AG04450 (cell line): ENCODE measurements at regions of chr9 and their contacts with region 1.

Region 1: GRCh38 chr9:72856972-72857623 is 95.8 kb downstream of the ALDH1A1 start:
- DNase-seq: peak; percentile 16
- H3K4me3 ChIP-seq: no peak overlapping the region
- H3K27ac ChIP-seq: no peak overlapping the region
- H3K27me3 ChIP-seq: no peaks in the 10 kb centered on the region
- CTCF ChIP-seq: peak; percentile 70

Region 2: GRCh38 chr9:72540348-72540873 is 316.7 kb before region 1 on chr9:
- CTCF ChIA-PET with region 1: no interaction called
- POLR2A ChIA-PET with region 1: no interaction called
- DNase-seq: no peak
- H3K4me3 ChIP-seq: no peak overlapping the region
- H3K27ac ChIP-seq: no peak overlapping the region
- H3K27me3 ChIP-seq: no peaks in the 10 kb centered on the region
- CTCF ChIP-seq: no peak

Region 3: DNA sequence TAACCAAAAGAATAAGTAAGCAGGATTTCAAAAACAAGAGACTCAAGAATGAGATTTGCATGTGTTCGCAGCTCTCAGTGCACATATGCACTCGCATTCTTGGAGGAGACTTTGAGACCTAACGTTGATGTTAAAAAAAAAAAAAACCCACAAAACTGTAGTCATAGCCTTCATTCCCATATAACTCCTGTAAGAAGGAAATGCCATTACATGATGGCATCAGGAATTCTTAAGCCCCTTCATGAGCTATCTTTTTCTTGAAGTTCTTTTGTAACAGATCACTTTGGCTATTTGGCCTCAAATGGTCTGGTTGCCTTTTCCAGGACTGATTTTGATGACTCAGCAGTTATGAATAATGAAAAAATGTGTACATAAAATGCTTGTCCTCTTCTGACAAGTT is 18.0 kb before region 1 on chr9:
- CTCF ChIA-PET with region 1: interaction called, 14 read pairs
- POLR2A ChIA-PET with region 1: no interaction called
- DNase-seq: no peak
- H3K4me3 ChIP-seq: no peak overlapping the region
- H3K27ac ChIP-seq: no peak overlapping the region
- H3K27me3 ChIP-seq: no peaks in the 10 kb centered on the region
- CTCF ChIP-seq: no peak

Region 4: GRCh38 chr9:72871685-72872084 is 14.6 kb after region 1 on chr9:
- CTCF ChIA-PET with region 1: interaction called, 10 read pairs
- POLR2A ChIA-PET with region 1: no interaction called
- DNase-seq: no peak
- H3K4me3 ChIP-seq: no peak overlapping the region; the same call in 1 of the 2 replicates
- H3K27ac ChIP-seq: no peak overlapping the region
- H3K27me3 ChIP-seq: no peaks in the 10 kb centered on the region
- CTCF ChIP-seq: peak; percentile 38

Region 5: GRCh38 chr9:73023025-73023541 is 166.0 kb after region 1 on chr9:
- CTCF ChIA-PET with region 1: interaction called, 68 read pairs
- POLR2A ChIA-PET with region 1: no interaction called
- DNase-seq: peak; percentile 27
- H3K4me3 ChIP-seq: no peak overlapping the region
- H3K27ac ChIP-seq: no peak overlapping the region
- H3K27me3 ChIP-seq: no peaks in the 10 kb centered on the region
- CTCF ChIP-seq: peak; percentile 87

Region 6: GRCh38 chr9:73081979-73082657 is 225.0 kb after region 1 on chr9:
- CTCF ChIA-PET with region 1: interaction called, 43 read pairs
- POLR2A ChIA-PET with region 1: no interaction called
- DNase-seq: no peak
- H3K4me3 ChIP-seq: no peak overlapping the region
- H3K27ac ChIP-seq: no peak overlapping the region
- H3K27me3 ChIP-seq: no peaks in the 10 kb centered on the region
- CTCF ChIP-seq: peak; percentile 86

Region 7: DNA sequence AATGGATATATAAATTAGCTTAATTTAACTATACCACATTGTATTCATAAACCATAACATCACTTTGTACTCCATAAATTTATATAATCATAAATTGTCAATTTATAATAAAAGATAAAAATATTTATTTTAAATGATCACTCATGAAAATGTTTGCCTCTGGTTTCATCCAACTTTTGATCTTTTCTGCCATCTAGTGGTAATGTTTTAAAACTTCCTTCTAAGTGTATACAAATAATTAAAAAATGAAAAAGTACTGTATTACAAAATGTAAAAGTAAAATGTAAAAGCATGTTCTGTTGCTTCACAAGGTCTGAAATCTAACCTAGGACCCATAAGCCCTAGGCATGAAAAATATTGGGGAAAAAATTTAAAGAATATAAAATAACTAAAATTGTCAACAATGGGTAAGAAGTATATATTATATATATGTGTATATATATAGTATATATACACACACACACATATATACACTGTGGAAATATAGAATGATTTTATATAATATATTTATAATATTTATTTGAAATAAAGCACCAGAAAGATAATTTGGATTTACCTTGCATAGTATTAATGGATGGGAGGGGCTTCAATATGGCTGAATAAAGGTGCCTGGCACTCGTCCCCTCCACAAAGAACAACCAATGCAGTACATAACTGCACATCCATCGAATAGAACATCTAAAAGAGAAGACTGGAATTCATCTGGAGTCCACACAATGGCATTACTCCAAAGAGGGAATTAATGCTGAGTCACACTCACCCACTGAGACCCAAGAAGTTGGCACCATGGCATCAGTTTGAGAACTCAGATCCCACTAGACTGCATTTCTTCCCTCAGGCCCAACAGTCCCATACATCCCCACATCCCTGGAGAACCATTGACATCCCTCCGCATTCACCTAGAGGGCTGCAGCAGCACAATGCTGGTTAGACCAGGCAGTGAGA is 327.1 kb after region 1 on chr9:
- CTCF ChIA-PET with region 1: interaction called, 20 read pairs
- POLR2A ChIA-PET with region 1: no interaction called
- DNase-seq: peak; percentile 8
- H3K4me3 ChIP-seq: no peak overlapping the region
- H3K27ac ChIP-seq: no peak overlapping the region
- H3K27me3 ChIP-seq: no peaks in the 10 kb centered on the region
- CTCF ChIP-seq: peak; percentile 44